ENCODE measurements at regions of chr2 and their contacts with region 1.

Region 1: DNA sequence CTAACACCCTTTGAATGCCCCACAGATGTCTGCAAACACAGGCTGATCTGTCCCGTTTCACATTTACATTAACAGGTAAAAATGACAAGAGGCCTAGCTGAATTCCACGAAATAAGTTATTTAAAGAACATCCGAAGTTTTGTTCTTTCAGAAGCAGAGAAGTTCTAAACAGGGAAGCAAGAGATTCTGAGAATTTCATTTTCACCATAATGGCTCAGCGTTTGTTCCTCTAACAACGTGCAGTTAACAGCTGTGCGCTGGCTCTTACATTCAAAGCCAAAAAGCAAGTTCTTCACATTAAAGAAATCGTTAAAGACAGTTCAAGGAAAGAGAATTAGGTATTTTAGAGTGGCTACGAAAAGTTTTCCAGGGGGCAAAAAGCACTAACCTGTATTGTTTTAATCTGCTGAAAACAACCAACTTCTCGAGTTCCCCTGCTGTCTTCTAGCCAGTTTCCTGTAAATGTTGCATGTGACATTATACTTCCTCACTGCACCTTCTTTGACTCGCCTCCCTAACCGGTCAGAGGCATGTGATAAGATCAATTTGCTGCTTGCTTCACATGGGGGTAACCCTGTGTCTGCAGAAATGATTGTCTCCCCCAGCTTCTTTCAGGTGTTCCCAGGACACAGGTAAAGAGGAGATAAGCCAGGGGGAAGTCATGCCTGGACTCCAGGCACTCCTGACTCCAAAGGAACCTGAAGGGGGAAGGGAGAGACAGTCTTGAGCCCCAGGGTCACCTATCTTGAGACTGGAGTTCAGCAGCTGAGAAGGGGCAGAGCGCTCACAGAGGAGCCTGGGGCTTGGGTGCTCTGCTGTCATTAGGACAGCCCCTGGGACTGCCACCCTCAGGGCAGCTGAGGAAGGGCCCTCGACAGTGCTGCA is 36.8 kb upstream of the WIPF1 start:
- DNase-seq: peak; percentile 78
- H3K4me3 ChIP-seq: peak overlapping the region; percentile 73
- H3K27ac ChIP-seq: peak overlapping the region; percentile 70
- H3K4me1 ChIP-seq: peaks cover 28% of the 10 kb centered on the region
- CTCF ChIP-seq: peak; percentile 64; the same call in 1 of the 2 replicates

Region 2: GRCh38 chr2:174577967-174578589 is 56.3 kb before region 1 on chr2:
- CTCF ChIA-PET with region 1: interaction called, 3 read pairs
- POLR2A ChIA-PET with region 1: interaction called, 3 read pairs
- intact Hi-C with region 1: loop called (anchors 1 kb)
- DNase-seq: peak; percentile 69
- H3K4me3 ChIP-seq: no peak overlapping the region
- H3K27ac ChIP-seq: no peak overlapping the region
- H3K4me1 ChIP-seq: peaks cover 8% of the 10 kb centered on the region
- CTCF ChIP-seq: peak; percentile 92

Region 3: GRCh38 chr2:174603280-174603679 is 31.1 kb before region 1 on chr2:
- CTCF ChIA-PET with region 1: interaction called, 4 read pairs
- POLR2A ChIA-PET with region 1: interaction called, 81 read pairs
- intact Hi-C with region 1: no loop called
- DNase-seq: peak; percentile 74
- H3K4me3 ChIP-seq: no peak overlapping the region
- H3K27ac ChIP-seq: no peak overlapping the region
- H3K4me1 ChIP-seq: peaks cover 79% of the 10 kb centered on the region
- CTCF ChIP-seq: peak; percentile 88

Region 4: GRCh38 chr2:174615871-174616436 is 18.4 kb before region 1 on chr2:
- CTCF ChIA-PET with region 1: interaction called, 4 read pairs
- POLR2A ChIA-PET with region 1: interaction called, 33 read pairs
- intact Hi-C with region 1: loop called (anchors 2 kb)
- DNase-seq: no peak
- H3K4me3 ChIP-seq: no peak overlapping the region
- H3K27ac ChIP-seq: no peak overlapping the region
- H3K4me1 ChIP-seq: peaks cover 61% of the 10 kb centered on the region
- CTCF ChIP-seq: no peak

Region 5: DNA sequence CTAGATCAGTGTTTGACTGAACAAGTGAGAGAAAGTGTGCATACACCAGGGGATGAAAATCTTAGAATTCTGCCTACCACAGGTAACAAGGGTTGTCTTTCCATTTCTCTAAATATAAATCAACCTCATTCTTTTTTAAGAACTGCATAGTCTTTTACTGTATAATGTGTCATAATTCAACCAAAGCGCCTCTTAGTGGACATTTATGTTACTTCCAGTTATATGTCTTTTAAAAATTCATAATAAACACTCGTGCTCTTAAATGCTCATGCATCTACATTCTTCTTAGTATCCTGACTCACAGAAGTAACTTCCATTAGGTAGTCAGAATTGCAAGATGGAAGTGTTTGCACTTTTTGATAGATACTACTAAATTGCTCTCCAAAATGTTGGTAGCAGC is 53.7 kb after region 1 on chr2:
- CTCF ChIA-PET with region 1: interaction called, 4 read pairs
- POLR2A ChIA-PET with region 1: interaction called, 3 read pairs
- intact Hi-C with region 1: loop called (anchors 5 kb)
- DNase-seq: peak; percentile 61
- H3K4me3 ChIP-seq: no peak overlapping the region
- H3K27ac ChIP-seq: no peak overlapping the region
- H3K4me1 ChIP-seq: no peaks in the 10 kb centered on the region
- CTCF ChIP-seq: peak; percentile 88

Region 6: DNA sequence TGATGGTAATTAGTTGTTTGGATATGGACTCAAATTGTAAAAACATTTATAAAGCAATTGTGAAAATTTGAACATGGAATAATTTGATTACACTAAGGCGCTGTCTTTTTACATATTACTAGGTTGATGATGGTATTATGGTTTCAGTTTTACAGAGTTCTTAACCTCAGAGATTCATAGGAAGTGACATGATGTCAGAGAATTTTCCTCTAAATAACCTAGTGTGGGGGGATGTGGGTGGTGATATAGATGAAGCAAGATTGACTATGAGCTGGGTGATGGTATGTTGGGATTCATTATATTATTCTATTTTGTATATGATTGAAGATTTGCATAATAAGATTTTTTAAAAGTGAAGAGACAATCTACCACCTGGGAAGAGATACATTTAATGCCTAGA is 593.0 kb after region 1 on chr2:
- CTCF ChIA-PET with region 1: no interaction called
- POLR2A ChIA-PET with region 1: no interaction called
- intact Hi-C with region 1: no loop called
- DNase-seq: no peak
- H3K4me3 ChIP-seq: no peak overlapping the region
- H3K27ac ChIP-seq: no peak overlapping the region
- H3K4me1 ChIP-seq: no peaks in the 10 kb centered on the region
- CTCF ChIP-seq: no peak

Measured in OCI-LY7 (cell line).